ENCODE measurements at regions of chr6 and their contacts with region 1.

Region 1: DNA sequence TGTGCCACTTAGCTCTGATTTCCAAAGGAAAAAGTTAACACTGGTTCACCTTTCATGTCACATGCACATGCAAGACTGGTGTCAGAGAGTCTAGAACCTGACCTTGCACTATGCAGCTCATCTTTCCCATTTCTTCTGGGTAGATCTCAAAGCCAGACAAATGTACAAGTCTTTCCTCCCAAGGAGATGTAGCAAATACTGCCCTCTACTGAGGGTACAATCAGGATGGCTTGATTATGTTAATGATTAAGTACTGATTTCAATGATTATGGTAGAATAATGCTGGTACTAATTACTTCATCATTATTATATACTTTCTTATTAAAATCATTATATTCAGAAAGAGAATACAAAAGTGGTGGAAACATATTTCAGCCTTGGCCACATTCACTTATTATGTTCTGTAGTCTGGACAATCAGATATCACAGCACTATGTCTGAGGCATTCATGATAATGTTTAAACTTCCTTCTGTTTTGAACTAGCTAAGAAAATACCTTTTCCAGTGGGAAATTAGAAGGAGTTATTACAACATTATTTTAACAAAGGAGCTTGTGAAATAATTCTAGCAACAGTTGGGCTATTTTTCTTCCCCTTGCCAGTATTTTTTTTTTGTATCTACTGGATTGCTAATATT is 68.5 kb upstream of the FOXO3 start:
- DNase-seq: peak; percentile 49
- H3K4me3 ChIP-seq: no peak overlapping the region
- H3K27ac ChIP-seq: no peak overlapping the region
- H3K4me1 ChIP-seq: no peaks in the 10 kb centered on the region
- CTCF ChIP-seq: peak; percentile 93

Region 2: DNA sequence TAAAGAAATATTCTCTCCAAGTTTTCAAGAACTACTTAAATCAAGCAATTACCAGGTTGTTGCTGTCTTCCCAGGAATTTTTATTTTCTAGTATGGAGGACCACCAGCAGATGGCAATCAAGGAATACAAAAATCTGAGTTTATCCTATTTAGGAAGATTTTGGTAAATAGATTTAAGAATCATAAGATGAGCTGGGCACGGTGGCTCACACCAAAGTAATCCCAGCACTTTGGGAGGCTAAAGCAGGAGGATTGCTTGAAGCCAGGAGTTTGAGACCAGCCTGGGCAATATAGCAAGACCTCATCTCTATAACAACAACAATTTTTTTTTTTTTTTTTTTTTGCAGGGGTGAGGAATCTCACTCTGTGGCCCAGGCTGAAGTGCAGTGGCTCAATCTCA is 515.0 kb before region 1 on chr6:
- CTCF ChIA-PET with region 1: no interaction called
- POLR2A ChIA-PET with region 1: no interaction called
- intact Hi-C with region 1: loop called (anchors 10 kb)
- DNase-seq: peak; percentile 28
- H3K4me3 ChIP-seq: no peak overlapping the region
- H3K27ac ChIP-seq: no peak overlapping the region
- H3K4me1 ChIP-seq: no peaks in the 10 kb centered on the region
- CTCF ChIP-seq: peak; percentile 72

Region 3: DNA sequence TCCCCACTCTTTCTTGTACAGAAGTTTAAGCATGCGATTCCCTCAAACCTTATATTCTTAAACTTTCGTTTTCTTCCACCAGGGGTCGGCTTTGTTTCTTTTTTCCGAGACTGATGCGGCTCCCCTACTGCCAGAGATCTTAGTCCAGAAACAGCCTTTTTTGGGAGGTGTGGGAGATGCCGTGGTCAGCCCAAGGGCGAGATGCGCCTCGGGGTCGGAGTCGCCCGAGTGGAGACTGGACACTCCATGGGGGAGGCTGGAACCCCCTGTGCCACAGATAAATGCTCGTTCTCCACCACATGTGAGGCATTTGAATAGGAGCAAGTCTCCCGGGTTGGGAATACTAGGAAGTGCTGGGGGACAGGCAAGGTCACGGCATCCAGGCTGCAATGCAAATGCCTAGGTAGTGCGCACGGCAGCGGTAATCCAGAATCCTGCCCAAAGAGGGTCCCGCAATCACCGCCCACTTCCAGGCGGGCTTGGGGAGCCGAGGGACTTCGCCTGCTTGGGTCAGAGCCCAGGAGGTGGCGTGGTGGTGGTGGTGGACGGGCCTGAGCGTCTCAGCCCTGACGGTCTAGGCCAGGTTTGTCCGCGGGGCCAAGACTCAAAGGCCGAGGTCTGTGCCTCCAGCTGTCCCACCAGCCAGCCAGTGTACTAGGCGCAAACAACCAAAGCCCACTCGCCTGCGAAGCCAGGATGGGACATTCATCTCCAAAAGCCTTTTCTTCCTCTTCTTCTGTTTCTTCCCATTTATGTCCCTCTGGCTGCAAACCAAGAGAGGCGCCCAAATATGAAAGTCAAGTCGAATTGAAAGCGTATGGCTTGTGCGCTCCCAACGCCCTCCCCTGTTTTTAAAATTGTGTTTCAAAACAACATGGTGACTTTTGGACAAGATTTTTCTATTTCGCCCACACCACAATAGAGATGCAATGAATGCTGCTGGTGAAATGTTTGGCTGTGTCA is 378.4 kb before region 1 on chr6:
- CTCF ChIA-PET with region 1: interaction called, 4 read pairs
- POLR2A ChIA-PET with region 1: interaction called, 4 read pairs
- intact Hi-C with region 1: loop called (anchors 1 kb)
- DNase-seq: peak; percentile 45
- H3K4me3 ChIP-seq: no peak overlapping the region
- H3K27ac ChIP-seq: no peak overlapping the region
- H3K4me1 ChIP-seq: peaks cover 5% of the 10 kb centered on the region
- CTCF ChIP-seq: peak; percentile 80

Region 4: GRCh38 chr6:108250240-108250866 is 241.9 kb before region 1 on chr6:
- CTCF ChIA-PET with region 1: interaction called, 3 read pairs
- POLR2A ChIA-PET with region 1: no interaction called
- intact Hi-C with region 1: loop called (anchors 1 kb)
- DNase-seq: peak; percentile 64
- H3K4me3 ChIP-seq: no peak overlapping the region
- H3K27ac ChIP-seq: no peak overlapping the region
- H3K4me1 ChIP-seq: peaks cover 13% of the 10 kb centered on the region
- CTCF ChIP-seq: peak; percentile 81